Psoas muscle (tissue), 8 donors: ENCODE measurements at regions of chr7 and their contacts with region 1.

Region 1: DNA sequence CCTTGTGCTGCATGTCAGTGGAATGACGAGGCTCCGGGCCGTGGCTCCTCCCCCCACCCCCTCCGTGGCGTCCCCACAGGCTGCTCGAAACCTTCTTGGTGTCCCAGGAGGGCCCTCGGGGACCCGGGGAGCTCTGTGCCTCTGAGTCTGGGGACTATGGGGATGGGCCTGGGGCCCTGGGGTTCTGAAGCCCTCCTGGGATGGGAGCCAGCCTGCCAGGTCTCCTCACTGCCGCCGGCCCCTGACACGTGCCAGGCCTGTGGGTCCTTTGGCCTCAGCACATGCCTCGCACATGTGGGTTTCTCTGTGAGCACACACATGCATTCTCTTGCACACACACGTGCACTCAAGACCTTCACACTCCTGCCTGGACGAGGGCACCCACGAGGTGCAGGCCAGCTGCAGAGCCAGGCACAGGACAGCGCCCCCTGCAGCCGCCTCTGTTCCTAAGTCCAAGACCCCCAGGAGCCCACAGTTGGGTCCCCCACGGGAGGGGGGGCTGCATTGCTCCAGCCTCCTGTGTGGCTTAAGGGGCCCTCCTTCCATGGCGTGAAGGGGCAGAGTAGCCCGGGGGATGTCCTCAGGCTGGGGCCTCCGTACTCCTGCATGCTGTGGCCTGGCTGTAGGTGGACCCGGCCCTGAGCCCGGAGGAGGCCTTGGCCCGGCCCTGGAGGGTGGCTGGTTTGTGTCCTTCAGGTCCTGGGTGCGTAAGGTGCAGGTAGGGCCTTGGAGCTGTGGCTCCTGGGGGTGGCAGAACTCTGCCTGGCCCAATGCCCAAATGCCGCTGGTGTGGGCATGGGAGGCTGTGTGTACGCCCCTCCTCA is 27.2 kb upstream of the AMZ1 start:
- DNase-seq: no peak
- ATAC-seq: no peak
- H3K4me3 ChIP-seq: no peak overlapping the region
- H3K27ac ChIP-seq: no peak overlapping the region
- H3K4me1 ChIP-seq: peaks cover 12% of the 10 kb centered on the region
- H3K27me3 ChIP-seq: peaks cover 0 to 7% (median 0%) of the 10 kb centered on the region in 3 donors
- CTCF ChIP-seq: peak; percentile 11

Region 2: GRCh38 chr7:2567679-2568278 is 93.0 kb before region 1 on chr7:
- intact Hi-C with region 1: loop called in 1 of 2 experiments (anchors 5 kb)
- DNase-seq: peak in 1 of 2 donors; percentile 51
- ATAC-seq: peak; percentile 62 to 81 (median 73)
- H3K4me3 ChIP-seq: no peak overlapping the region
- H3K27ac ChIP-seq: no peak overlapping the region
- H3K4me1 ChIP-seq: no peaks in the 10 kb centered on the region
- H3K27me3 ChIP-seq: no peaks in the 10 kb centered on the region
- CTCF ChIP-seq: peak; percentile 56